Ascending aorta (tissue), 2 donors: ENCODE measurements at regions of chr4 and their contacts with region 1.

Region 1: GRCh38 chr4:153083447-153083947 is 120.7 kb upstream of the TRIM2 start:
- DNase-seq: peak in 1 of 2 donors; percentile 78
- H3K4me3 ChIP-seq: no peak overlapping the region
- H3K27ac ChIP-seq: no peak overlapping the region
- H3K4me1 ChIP-seq: peaks cover 0 to 6% of the 10 kb centered on the region in 2 donors
- H3K27me3 ChIP-seq: no peaks in the 10 kb centered on the region
- CTCF ChIP-seq: peak; percentile 56 to 76 (median 58)

Region 2: DNA sequence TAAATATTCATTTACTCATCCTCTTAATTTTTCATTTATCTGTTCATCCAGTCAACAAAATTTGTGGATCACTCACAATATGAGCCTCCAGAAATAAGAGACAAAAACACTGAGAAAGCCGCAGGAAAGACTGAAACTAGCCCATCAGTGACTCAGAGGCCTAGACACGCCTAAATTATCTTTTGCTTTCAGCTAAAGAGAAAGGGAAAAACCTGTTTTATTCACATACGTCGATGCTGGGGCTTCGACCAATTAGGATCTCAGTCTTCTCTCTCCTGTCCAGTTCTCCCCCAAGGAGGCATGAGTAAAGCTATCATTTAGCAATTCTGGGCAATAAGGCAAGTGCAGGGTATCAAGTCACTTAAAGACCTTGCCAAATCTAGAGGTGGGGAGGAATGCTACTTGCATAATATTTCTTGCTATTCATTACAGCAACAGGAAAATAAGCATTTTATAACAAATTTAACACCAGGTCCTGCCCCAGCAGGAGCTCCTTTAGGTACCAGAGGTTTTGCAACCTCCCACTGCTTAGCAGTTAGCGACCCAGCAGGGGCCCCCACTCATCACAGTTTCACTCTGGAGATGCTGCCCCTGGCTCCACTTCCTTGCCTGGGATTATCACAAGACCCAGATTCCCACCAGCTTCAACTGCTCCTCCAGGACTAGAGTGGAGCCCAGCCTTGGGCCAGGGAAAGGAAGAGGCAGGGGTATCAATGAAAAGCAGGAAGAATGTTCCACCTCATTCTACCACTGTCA is 373.6 kb before region 1 on chr4:
- intact Hi-C with region 1: no loop called
- DNase-seq: no peak
- H3K4me3 ChIP-seq: no peak overlapping the region
- H3K27ac ChIP-seq: no peak overlapping the region
- H3K4me1 ChIP-seq: no peaks in the 10 kb centered on the region
- H3K27me3 ChIP-seq: no peaks in the 10 kb centered on the region
- CTCF ChIP-seq: no peak

Region 3: GRCh38 chr4:152992047-152992446 is 91.5 kb before region 1 on chr4:
- intact Hi-C with region 1: no loop called
- DNase-seq: no peak
- H3K4me3 ChIP-seq: no peak overlapping the region
- H3K27ac ChIP-seq: no peak overlapping the region
- H3K4me1 ChIP-seq: no peaks in the 10 kb centered on the region
- H3K27me3 ChIP-seq: no peaks in the 10 kb centered on the region
- CTCF ChIP-seq: no peak

Region 4: DNA sequence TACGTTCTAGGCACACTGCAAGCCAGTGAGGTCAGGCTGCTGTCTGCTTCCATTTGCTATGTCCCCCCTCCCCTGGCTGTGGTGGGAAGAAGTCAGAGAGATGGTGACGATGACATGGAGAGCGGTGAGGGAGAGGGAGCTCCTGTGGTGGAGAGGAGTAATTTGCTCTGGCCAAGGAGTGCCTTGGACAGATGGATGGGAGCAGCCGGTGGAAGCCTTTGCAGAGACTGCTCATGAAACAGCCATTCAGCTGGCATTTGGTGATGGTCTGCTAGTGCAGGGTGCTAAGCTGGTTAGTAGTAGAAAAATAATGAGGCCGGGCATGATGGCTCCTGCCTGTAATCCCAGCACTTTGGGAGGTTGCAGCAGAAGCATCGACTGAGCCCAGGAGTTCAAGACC is 23.3 kb before region 1 on chr4:
- intact Hi-C with region 1: no loop called
- DNase-seq: no peak
- H3K4me3 ChIP-seq: no peak overlapping the region
- H3K27ac ChIP-seq: no peak overlapping the region
- H3K4me1 ChIP-seq: no peaks in the 10 kb centered on the region
- H3K27me3 ChIP-seq: no peaks in the 10 kb centered on the region
- CTCF ChIP-seq: no peak

Region 5: GRCh38 chr4:153127760-153128494 is 44.4 kb after region 1 on chr4:
- intact Hi-C with region 1: loop called (anchors 1 kb)
- DNase-seq: peak in 1 of 2 donors; percentile 93
- H3K4me3 ChIP-seq: peak overlapping the region in 1 of 2 donors; percentile 29
- H3K27ac ChIP-seq: no peak overlapping the region
- H3K4me1 ChIP-seq: peaks cover 0 to 4% of the 10 kb centered on the region in 2 donors
- H3K27me3 ChIP-seq: no peaks in the 10 kb centered on the region
- CTCF ChIP-seq: peak; percentile 75 to 88 (median 82)